PC-9 (cell line): ENCODE measurements at regions of chr19 and their contacts with region 1.

Region 1: GRCh38 chr19:48646001-48646721 is at the start of gene CA11:
- DNase-seq: peak; percentile 66 to 90
- H3K4me3 ChIP-seq: peak within 1 kb of the TSS; percentile 69
- H3K27ac ChIP-seq: no peak within 1 kb of the TSS
- H3K4me1 ChIP-seq: peaks cover 23% of the 10 kb centered on the region
- H3K27me3 ChIP-seq: no peaks in the 10 kb centered on the region
- CTCF ChIP-seq: peak; percentile 97
- total RNA-seq, gene CA11: 11.0 and 12.2 TPM in 2 replicates

Region 2: DNA sequence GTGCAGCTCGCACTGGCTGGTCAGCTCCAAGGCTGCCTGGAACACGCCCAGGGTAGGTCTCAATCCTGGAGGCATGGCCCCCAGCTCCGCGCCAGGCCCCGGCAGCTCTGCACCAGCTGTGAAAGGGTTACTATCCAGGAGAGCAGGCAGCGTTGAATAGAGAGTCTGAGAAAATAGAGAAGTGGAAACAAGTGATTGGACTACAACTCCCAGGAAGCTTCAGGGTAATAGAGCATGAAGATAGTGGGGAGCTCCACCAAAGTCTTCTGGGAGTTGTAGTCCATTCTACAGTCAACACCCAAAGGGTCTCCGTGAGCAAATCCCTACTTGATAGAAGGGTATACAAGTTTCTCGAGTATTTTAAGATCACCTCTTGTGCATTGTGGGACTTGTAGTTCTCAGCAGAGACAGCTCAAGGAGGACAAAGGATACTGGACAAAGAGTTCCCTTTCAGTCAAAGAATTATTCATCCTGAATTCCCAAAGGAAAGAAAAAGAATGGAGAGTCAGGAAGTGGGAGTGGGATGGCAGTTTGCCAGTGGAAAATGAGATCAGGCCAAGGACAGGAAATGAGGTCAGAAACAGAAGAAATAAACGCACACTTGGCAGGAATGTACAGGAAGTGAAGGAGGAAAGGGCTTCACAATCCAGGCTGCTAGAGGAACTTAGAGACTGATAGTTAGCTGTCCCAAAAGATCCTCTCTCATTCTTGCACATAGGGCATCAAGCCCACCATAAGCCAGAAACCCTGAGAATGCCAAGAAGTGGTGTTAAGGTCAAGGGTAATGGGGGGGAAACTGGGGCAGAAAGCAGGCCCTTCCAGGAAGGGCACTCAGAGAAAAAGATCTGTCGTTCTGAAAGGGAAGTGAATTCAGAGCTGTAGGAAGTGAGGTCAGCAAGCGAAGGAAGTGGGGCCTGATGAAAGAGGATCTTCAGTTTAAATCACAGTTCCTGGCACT is 78.9 kb after region 1 on chr19:
- CTCF ChIA-PET with region 1: no interaction called
- POLR2A ChIA-PET with region 1: interaction called, 10 read pairs
- intact Hi-C with region 1: no loop called
- DNase-seq: peak; percentile 37 to 51
- H3K4me3 ChIP-seq: no peak overlapping the region
- H3K27ac ChIP-seq: no peak overlapping the region
- H3K4me1 ChIP-seq: no peaks in the 10 kb centered on the region
- H3K27me3 ChIP-seq: no peaks in the 10 kb centered on the region
- CTCF ChIP-seq: no peak

Region 3: GRCh38 chr19:48795055-48795684 is 149.0 kb after region 1 on chr19:
- CTCF ChIA-PET with region 1: no interaction called
- POLR2A ChIA-PET with region 1: no interaction called
- intact Hi-C with region 1: loop called (anchors 2 kb)
- DNase-seq: peak; percentile 87 to 88
- H3K4me3 ChIP-seq: peak overlapping the region; percentile 55
- H3K27ac ChIP-seq: peak overlapping the region; percentile 34
- H3K4me1 ChIP-seq: 0 out of 2 replicates have a peak, but pooled peaks cover 3% of the 10 kb centered on the region
- H3K27me3 ChIP-seq: no peaks in the 10 kb centered on the region
- CTCF ChIP-seq: peak; percentile 100

Region 4: GRCh38 chr19:48842789-48843162 is 196.6 kb after region 1 on chr19:
- CTCF ChIA-PET with region 1: interaction called, 4 read pairs
- POLR2A ChIA-PET with region 1: interaction called, 5 read pairs
- intact Hi-C with region 1: loop called (anchors 2 kb)
- DNase-seq: peak; percentile 36 to 50
- H3K4me3 ChIP-seq: no peak overlapping the region
- H3K27ac ChIP-seq: no peak overlapping the region
- H3K4me1 ChIP-seq: no peaks in the 10 kb centered on the region
- H3K27me3 ChIP-seq: no peaks in the 10 kb centered on the region
- CTCF ChIP-seq: peak; percentile 95

Region 5: GRCh38 chr19:48993175-48994034 is 347.2 kb after region 1 on chr19 and contains the starts of genes GYS1 and RUVBL2:
- CTCF ChIA-PET with region 1: no interaction called
- POLR2A ChIA-PET with region 1: interaction called, 5 read pairs
- intact Hi-C with region 1: loop called (anchors 10 kb)
- DNase-seq: peak; percentile 99
- H3K4me3 ChIP-seq: peak within 1 kb of the TSS; percentile 97
- H3K27ac ChIP-seq: peak within 1 kb of the TSS; percentile 41; the same call in 1 of the 2 replicates
- H3K4me1 ChIP-seq: peaks cover 16% of the 10 kb centered on the region
- H3K27me3 ChIP-seq: no peaks in the 10 kb centered on the region
- CTCF ChIP-seq: peak; percentile 91
- total RNA-seq, gene GYS1: 47.5 and 54.2 TPM in 2 replicates
- total RNA-seq, gene RUVBL2: 175 and 179 TPM in 2 replicates